ENCODE measurements at regions of chr1 and their contacts with region 1.

Region 1: GRCh38 chr1:66725885-66726665 is 26.2 kb upstream of the DYNLT5 start:
- DNase-seq: peak; percentile 45
- ATAC-seq: peak; percentile 94
- H3K4me3 ChIP-seq: no peak overlapping the region
- H3K27ac ChIP-seq: no peak overlapping the region
- H3K4me1 ChIP-seq: peaks cover 0 to 6% of the 10 kb centered on the region in 2 experiments; a peak in 1 of 4 replicates
- H3K27me3 ChIP-seq: no peaks in the 10 kb centered on the region
- CTCF ChIP-seq: peak; percentile 71 to 99 (median 96)
- POLR2A ChIP-seq: no peak
- RAD21 ChIP-seq: peak; percentile 86

Region 2: DNA sequence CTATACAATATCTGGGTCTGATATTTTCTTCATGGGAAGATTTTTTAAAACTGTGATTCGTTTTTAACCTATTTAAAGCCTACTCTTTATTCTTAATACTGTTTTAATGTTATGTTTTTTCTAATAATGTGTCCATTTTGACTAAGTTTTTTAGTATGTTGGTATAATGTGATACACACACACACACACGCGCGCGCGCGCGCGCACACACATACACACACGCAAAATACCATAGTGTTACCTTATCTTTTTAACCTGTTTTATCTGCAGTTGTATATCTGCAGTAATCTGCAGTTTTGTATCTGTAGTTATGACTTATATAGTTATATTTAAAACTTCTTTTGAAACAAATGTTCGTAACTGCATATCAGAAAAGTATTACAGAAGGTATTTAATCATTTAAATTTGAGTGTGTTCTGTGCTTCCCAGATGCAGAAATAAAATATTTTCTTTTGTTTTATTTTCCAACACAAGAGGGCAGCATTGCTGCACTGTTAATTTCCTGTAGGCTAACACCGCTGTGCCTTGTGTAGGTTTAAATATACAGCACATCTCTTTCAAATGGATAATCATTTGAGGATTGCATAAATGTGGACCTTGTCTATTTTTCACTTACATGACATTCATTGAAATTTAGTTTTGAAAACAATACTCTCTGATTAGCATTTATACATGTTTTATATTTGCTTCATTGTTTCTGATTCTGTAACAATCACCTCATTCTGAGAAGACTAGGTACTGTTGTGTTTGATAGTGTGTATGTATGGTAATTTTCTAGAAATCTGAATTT is 767.3 kb before region 1 on chr1:
- CTCF ChIA-PET with region 1: no interaction called
- POLR2A ChIA-PET with region 1: no interaction called
- RAD21 ChIA-PET with region 1: no interaction called
- intact Hi-C with region 1: loop called (anchors 10 kb)
- DNase-seq: peak; percentile 44
- ATAC-seq: peak; percentile 91
- H3K4me3 ChIP-seq: no peak overlapping the region
- H3K27ac ChIP-seq: no peak overlapping the region
- H3K4me1 ChIP-seq: peaks cover 4 to 10% of the 10 kb centered on the region in 2 experiments; a peak in 2 of 4 replicates
- H3K27me3 ChIP-seq: no peaks in the 10 kb centered on the region
- CTCF ChIP-seq: peak; percentile 41 to 97 (median 71); a peak in 5 of 6 replicates
- POLR2A ChIP-seq: no peak
- RAD21 ChIP-seq: peak; percentile 95

Region 3: DNA sequence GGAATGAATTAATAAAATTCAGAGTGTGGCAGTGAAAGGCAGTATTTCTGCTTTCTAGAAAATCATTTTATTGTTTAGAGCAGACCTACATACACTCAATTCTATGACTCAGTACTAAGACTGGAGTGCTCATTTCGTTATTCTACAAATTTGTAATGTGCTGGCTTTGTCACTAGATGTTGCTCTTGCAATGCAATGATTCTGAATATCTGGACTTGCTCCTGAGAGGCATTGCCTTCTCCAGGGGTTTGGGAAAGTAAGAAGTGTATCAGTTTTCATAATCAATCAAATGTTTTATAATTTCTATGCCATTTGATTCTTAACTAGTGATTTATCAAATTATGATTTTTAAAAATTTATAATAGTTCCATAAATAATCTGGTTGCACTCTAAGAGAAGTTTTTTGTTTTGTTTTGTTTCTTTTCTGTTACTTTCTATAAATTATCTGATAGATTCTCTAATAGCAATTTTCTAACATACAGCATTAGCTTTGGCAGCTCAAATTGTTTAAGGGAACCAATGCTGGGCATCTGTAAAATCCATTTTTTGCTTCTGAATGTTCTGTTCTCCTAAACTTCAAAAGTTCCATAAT is 472.6 kb before region 1 on chr1:
- CTCF ChIA-PET with region 1: no interaction called
- POLR2A ChIA-PET with region 1: no interaction called
- RAD21 ChIA-PET with region 1: no interaction called
- intact Hi-C with region 1: loop called (anchors 2 kb)
- DNase-seq: peak; percentile 65
- ATAC-seq: peak; percentile 88
- H3K4me3 ChIP-seq: no peak overlapping the region
- H3K27ac ChIP-seq: peak overlapping the region; percentile 12; the same call in 1 of the 2 replicates
- H3K4me1 ChIP-seq: peaks cover 17 to 62% of the 10 kb centered on the region in 2 experiments
- H3K27me3 ChIP-seq: no peaks in the 10 kb centered on the region
- CTCF ChIP-seq: peak; percentile 67 to 93 (median 87)
- POLR2A ChIP-seq: no peak
- RAD21 ChIP-seq: peak; percentile 99

Region 4: GRCh38 chr1:66360285-66360724 is 365.8 kb before region 1 on chr1:
- CTCF ChIA-PET with region 1: no interaction called
- POLR2A ChIA-PET with region 1: no interaction called
- RAD21 ChIA-PET with region 1: no interaction called
- intact Hi-C with region 1: no loop called
- DNase-seq: no peak
- ATAC-seq: peak; percentile 55
- H3K4me3 ChIP-seq: no peak overlapping the region
- H3K27ac ChIP-seq: peak overlapping the region; percentile 96
- H3K4me1 ChIP-seq: peaks cover 45 to 50% of the 10 kb centered on the region in 2 experiments
- H3K27me3 ChIP-seq: no peaks in the 10 kb centered on the region
- CTCF ChIP-seq: peak in 2 of 3 experiments; percentile 20 to 46; a peak in 2 of 6 replicates
- POLR2A ChIP-seq: no peak
- RAD21 ChIP-seq: 0 out of 2 replicates have a peak, but pooled peaks have one; percentile 4

Region 5: DNA sequence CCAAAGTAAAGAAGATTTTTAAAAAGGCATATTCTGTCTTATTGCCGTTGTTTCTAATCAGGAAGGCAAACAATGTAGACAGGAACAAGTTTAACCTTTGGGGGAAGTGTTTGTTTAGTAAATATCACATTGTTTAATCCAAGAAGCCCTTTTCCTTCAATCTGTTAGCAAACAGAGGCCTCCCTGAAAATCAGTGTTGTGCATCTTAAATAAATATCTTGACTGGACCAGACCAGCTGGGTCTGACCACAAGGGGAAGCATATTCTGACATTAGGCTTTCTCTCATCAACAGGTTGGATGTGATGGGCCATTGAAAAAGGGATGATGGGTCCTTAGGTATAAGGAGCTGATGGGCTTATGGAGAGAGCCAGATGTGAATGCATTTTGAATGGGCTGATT is 273.9 kb before region 1 on chr1:
- CTCF ChIA-PET with region 1: no interaction called
- POLR2A ChIA-PET with region 1: no interaction called
- RAD21 ChIA-PET with region 1: no interaction called
- intact Hi-C with region 1: loop called (anchors 2 kb)
- DNase-seq: no peak
- ATAC-seq: no peak; the same call in 1 of the 2 replicates
- H3K4me3 ChIP-seq: no peak overlapping the region
- H3K27ac ChIP-seq: no peak overlapping the region
- H3K4me1 ChIP-seq: no peaks in the 10 kb centered on the region
- H3K27me3 ChIP-seq: no peaks in the 10 kb centered on the region
- CTCF ChIP-seq: peak; percentile 5 to 15 (median 14); a peak in 2 of 6 replicates
- POLR2A ChIP-seq: no peak
- RAD21 ChIP-seq: peak; percentile 27; the same call in 1 of the 2 replicates

Region 6: GRCh38 chr1:66685670-66686069 is 40.4 kb before region 1 on chr1:
- CTCF ChIA-PET with region 1: no interaction called
- POLR2A ChIA-PET with region 1: no interaction called
- RAD21 ChIA-PET with region 1: no interaction called
- intact Hi-C with region 1: loop called (anchors 1 kb)
- DNase-seq: no peak
- ATAC-seq: no peak
- H3K4me3 ChIP-seq: no peak overlapping the region
- H3K27ac ChIP-seq: no peak overlapping the region
- H3K4me1 ChIP-seq: no peaks in the 10 kb centered on the region
- H3K27me3 ChIP-seq: no peaks in the 10 kb centered on the region
- CTCF ChIP-seq: no peak
- POLR2A ChIP-seq: no peak
- RAD21 ChIP-seq: no peak

Region 7: GRCh38 chr1:66831529-66832239 is 105.6 kb after region 1 on chr1:
- CTCF ChIA-PET with region 1: no interaction called
- POLR2A ChIA-PET with region 1: no interaction called
- RAD21 ChIA-PET with region 1: no interaction called
- intact Hi-C with region 1: no loop called
- DNase-seq: no peak
- ATAC-seq: no peak
- H3K4me3 ChIP-seq: no peak overlapping the region
- H3K27ac ChIP-seq: no peak overlapping the region
- H3K4me1 ChIP-seq: no peaks in the 10 kb centered on the region
- H3K27me3 ChIP-seq: no peaks in the 10 kb centered on the region
- CTCF ChIP-seq: no peak
- POLR2A ChIP-seq: no peak
- RAD21 ChIP-seq: no peak

Measured in HCT116 (cell line).